Activated naive CD4-positive, alpha-beta T cell treated with anti-CD3 and anti-CD28 coated beads for 36 hours (primary cell): ENCODE measurements at regions of chr18 and their contacts with region 1.

Region 1: DNA sequence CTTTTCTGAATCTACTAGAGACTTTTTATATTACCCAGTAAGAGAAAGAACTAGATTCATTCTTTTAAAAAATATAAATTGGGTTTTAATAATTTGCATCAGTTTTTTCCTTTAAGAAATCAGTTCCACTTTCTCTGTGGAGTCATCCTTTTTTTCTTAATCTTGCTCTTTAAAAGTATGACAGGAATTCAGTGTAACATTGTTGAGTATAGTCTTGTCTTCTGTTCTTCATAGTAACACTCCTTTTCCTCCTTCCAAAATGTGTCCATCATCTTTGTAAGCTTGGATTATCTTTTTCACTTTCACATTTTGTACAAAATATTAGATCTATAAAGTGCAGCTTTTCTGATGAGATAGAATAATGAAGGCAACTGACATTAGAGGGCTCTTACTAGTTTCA is 135.4 kb downstream of the HAUS1 start:
- DNase-seq: no peak
- H3K4me3 Mint-ChIP-seq: no peak overlapping the region
- H3K27ac Mint-ChIP-seq: no peak overlapping the region
- H3K4me1 Mint-ChIP-seq: peaks cover 44% of the 10 kb centered on the region
- H3K27me3 Mint-ChIP-seq: no peaks in the 10 kb centered on the region

Region 2: DNA sequence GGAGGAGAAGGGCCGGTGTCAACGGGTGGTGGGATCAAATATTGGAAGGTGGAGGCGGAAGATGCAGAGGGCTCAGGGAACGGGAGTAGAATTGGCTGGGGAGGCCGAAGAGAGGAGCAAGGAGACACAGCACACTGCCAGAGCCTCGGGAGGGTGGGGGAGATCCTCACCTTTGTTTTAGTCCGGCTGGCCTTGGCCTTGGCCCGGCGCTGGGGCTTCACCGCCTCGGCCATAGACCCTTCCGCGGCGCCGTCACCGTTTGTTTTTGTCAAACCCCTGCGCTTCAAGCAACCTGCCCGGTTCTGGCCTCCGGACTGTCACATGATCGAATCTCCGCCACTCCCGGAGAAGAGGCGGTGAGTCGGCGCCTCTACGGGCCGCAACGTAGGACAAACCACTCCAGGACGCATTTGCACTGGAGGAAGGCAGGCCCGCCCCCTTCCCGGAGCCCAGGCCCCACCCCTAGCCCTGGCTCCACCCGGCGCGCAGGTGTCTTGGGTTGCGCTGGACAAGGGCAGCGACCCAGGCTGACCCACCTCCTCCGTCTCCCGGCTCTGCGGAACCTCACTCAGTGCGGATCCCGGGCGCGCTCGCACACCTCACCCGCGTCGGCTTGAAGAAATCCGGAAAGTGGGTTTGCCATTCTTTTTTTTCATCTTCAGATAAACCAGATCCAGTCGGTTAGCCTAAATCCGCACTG is 272.4 kb before region 1 on chr18 and contains the start of gene EPG5:
- CTCF ChIA-PET with region 1: no interaction called
- intact Hi-C with region 1: no loop called
- DNase-seq: peak; percentile 98
- H3K4me3 Mint-ChIP-seq: peak within 1 kb of the TSS; percentile 97
- H3K27ac Mint-ChIP-seq: peak within 1 kb of the TSS; percentile 86
- H3K4me1 Mint-ChIP-seq: peaks cover 33% of the 10 kb centered on the region
- H3K27me3 Mint-ChIP-seq: no peaks in the 10 kb centered on the region
- total RNA-seq, gene EPG5: 18.3 to 21.2 TPM

Region 3: DNA sequence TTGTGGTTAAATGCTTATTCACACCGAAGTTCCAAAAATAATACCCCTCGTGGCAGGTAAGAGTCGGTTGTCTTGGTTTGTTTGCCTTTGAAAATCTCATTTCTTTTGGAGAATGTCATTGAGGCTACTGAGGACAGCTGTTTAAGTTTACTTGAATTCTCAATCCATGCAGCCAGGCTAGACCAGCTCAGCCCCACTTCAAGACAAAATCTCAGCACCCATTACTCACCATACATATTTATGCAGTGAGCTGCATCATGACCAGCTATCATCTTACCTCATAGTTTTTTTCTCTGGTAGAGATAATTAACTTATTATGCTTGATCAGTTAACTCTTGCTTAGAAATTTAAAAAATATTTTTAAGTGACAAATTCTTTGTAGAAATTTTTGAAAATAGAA is 19.4 kb before region 1 on chr18:
- CTCF ChIA-PET with region 1: interaction called, 4 read pairs
- intact Hi-C with region 1: loop called (anchors 1 kb)
- DNase-seq: no peak
- H3K4me3 Mint-ChIP-seq: no peak overlapping the region
- H3K27ac Mint-ChIP-seq: no peak overlapping the region
- H3K4me1 Mint-ChIP-seq: peaks cover 79% of the 10 kb centered on the region
- H3K27me3 Mint-ChIP-seq: no peaks in the 10 kb centered on the region

Region 4: DNA sequence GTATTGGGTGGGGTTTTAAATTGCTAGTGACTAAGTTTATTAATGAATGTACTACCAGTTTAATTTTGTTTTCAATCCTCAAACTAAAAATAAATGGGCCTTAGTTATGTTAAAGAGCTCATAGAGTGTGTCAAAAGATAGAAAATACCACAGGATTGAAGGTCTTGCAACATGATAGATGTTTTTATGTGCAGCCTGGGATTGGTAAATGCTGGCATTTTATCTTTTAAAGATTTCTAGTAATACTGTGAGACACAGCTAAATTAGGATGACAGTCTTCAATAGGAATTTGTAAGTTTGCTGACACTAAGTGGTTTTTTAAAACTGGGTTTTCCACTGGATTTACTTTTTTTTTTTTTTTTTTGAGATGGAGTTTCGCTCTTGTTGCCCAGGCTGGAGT is 13.1 kb before region 1 on chr18:
- CTCF ChIA-PET with region 1: interaction called, 4 read pairs
- intact Hi-C with region 1: loop called (anchors 1 kb)
- DNase-seq: no peak
- H3K4me3 Mint-ChIP-seq: no peak overlapping the region
- H3K27ac Mint-ChIP-seq: no peak overlapping the region
- H3K4me1 Mint-ChIP-seq: peaks cover 76% of the 10 kb centered on the region
- H3K27me3 Mint-ChIP-seq: no peaks in the 10 kb centered on the region

Region 5: GRCh38 chr18:46273829-46274228 is 34.3 kb after region 1 on chr18:
- CTCF ChIA-PET with region 1: no interaction called
- intact Hi-C with region 1: no loop called
- DNase-seq: no peak
- H3K4me3 Mint-ChIP-seq: no peak overlapping the region
- H3K27ac Mint-ChIP-seq: no peak overlapping the region
- H3K4me1 Mint-ChIP-seq: peaks cover 13% of the 10 kb centered on the region
- H3K27me3 Mint-ChIP-seq: no peaks in the 10 kb centered on the region

Region 6: GRCh38 chr18:46291149-46291548 is 51.6 kb after region 1 on chr18:
- CTCF ChIA-PET with region 1: no interaction called
- intact Hi-C with region 1: loop called (anchors 10 kb)
- DNase-seq: peak; percentile 15
- H3K4me3 Mint-ChIP-seq: no peak overlapping the region
- H3K27ac Mint-ChIP-seq: no peak overlapping the region
- H3K4me1 Mint-ChIP-seq: no peaks in the 10 kb centered on the region
- H3K27me3 Mint-ChIP-seq: no peaks in the 10 kb centered on the region